ENCODE measurements at regions of chr6 and their contacts with region 1.

Region 1: DNA sequence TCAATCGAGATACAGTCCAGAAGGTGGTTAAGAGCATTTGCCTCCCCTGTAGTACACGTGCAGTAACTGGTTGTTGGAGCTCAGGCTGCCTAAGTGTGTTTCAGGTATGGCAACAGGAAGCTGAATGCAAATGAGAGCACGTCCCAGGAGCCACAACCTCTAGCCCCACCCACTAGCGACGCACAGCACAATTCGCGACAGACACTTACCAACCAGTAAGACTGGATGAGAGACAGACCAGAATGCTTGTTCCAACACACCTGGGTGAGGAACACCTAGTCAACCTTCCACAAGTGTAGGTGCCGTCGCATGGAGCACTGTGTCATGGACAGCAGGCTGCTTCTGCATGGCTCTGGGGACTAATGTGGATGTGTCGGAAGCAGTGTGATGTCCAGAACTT is 7.2 kb upstream of the SERPINB1 start:
- DNase-seq: no peak
- H3K4me3 ChIP-seq: no peak overlapping the region
- H3K27ac ChIP-seq: no peak overlapping the region
- H3K4me1 ChIP-seq: peaks cover 31% of the 10 kb centered on the region
- H3K27me3 ChIP-seq: no peaks in the 10 kb centered on the region
- CTCF ChIP-seq: no peak
- POLR2A ChIP-seq: no peak

Region 2: DNA sequence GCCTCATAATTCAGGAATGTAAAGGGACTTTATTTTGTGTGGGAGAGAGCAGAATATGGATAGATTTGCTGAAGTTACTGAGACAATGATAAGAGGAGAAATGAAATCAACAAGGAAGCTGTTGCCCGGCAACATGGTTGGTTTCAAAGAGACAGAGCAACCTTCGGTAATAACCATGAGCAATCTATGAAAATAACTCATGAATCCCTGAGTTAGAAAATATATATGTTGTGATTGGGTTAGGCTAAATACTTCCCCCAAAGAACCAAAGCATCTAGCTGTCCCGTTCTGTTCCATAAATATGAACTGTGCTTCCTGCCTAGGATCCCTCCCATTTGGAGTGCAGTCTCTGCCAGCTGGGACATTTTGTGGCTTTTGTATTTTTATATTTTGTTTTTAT is 30.3 kb before region 1 on chr6:
- CTCF ChIA-PET with region 1: interaction called, 10 read pairs
- POLR2A ChIA-PET with region 1: no interaction called
- dilution Hi-C with region 1: no loop called
- intact Hi-C with region 1: loop called (anchors 1 kb)
- DNase-seq: peak; percentile 88
- H3K4me3 ChIP-seq: peak overlapping the region in 1 of 3 experiments; percentile 28
- H3K27ac ChIP-seq: peak overlapping the region; percentile 92
- H3K4me1 ChIP-seq: peaks cover 44% of the 10 kb centered on the region
- H3K27me3 ChIP-seq: no peaks in the 10 kb centered on the region
- CTCF ChIP-seq: no peak
- POLR2A ChIP-seq: no peak

Region 3: DNA sequence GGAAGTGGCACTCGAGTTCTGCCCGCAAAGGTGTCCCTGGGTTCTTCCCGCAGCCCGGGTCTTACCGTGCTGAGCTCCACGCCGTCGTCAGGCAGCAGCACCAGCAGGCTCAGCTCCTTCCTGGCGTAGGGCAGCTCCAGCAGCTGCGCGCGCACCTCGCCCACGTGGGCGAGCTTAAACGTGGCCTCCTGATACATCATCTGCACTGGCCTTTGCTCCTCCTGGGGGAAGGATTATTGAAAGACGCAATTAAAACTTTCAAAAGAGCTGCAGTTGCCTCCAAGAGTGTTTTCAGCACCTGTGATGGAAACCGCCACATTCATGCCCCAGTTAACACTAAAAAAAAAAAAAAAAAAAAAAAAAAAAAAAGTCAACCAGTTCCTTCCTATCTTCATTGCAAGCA is 42.9 kb after region 1 on chr6:
- CTCF ChIA-PET with region 1: interaction called, 10 read pairs
- POLR2A ChIA-PET with region 1: no interaction called
- dilution Hi-C with region 1: no loop called
- intact Hi-C with region 1: no loop called
- DNase-seq: no peak
- H3K4me3 ChIP-seq: no peak overlapping the region
- H3K27ac ChIP-seq: no peak overlapping the region
- H3K4me1 ChIP-seq: no peaks in the 10 kb centered on the region
- H3K27me3 ChIP-seq: no peaks in the 10 kb centered on the region
- CTCF ChIP-seq: no peak
- POLR2A ChIP-seq: no peak

Region 4: DNA sequence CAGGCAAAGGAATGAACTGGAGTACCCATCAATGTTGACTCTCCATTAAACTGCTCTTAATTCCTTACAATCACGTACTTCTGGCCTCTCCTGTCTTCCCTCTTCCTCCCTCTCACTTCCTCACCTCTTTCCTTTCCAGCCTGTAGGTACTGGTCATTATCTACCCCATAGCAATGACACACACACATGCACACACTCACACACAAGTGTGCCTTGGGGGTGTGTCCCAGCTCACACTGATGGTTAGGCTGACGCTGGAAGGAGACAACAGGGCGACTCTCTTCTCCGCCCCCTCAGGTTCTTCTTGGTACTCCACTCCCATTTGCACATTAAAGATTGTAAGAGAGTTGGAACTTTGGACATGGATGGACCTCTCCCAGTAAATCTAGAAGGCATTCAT is 68.2 kb after region 1 on chr6:
- CTCF ChIA-PET with region 1: interaction called, 19 read pairs
- POLR2A ChIA-PET with region 1: no interaction called
- dilution Hi-C with region 1: no loop called
- intact Hi-C with region 1: no loop called
- DNase-seq: no peak
- H3K4me3 ChIP-seq: no peak overlapping the region
- H3K27ac ChIP-seq: no peak overlapping the region
- H3K4me1 ChIP-seq: no peaks in the 10 kb centered on the region
- H3K27me3 ChIP-seq: no peaks in the 10 kb centered on the region
- CTCF ChIP-seq: no peak
- POLR2A ChIP-seq: no peak

Region 5: GRCh38 chr6:2988426-2989331 is 139.8 kb after region 1 on chr6:
- CTCF ChIA-PET with region 1: interaction called, 72 read pairs
- POLR2A ChIA-PET with region 1: no interaction called
- dilution Hi-C with region 1: no loop called
- intact Hi-C with region 1: loop called (anchors 1 kb)
- DNase-seq: peak; percentile 98
- H3K4me3 ChIP-seq: peak overlapping the region; percentile 53 to 78 (median 68)
- H3K27ac ChIP-seq: peak overlapping the region; percentile 84
- H3K4me1 ChIP-seq: peaks cover 15% of the 10 kb centered on the region
- H3K27me3 ChIP-seq: no peaks in the 10 kb centered on the region
- CTCF ChIP-seq: peak; percentile 80 to 82
- POLR2A ChIP-seq: peak; percentile 93

Measured in endothelial cell of umbilical vein (primary cell).